Pancreas (tissue), 10 donors: ENCODE measurements at regions of chr5 and their contacts with region 1.

Region 1: GRCh38 chr5:36739751-36740221 is 133.4 kb downstream of the SLC1A3 start:
- DNase-seq: peak; percentile 66 to 90 (median 78)
- ATAC-seq: peak; percentile 49 to 82 (median 72)
- H3K4me3 ChIP-seq: no peak overlapping the region
- H3K27ac ChIP-seq: peak overlapping the region in 3 of 4 donors; percentile 3 to 78 (median 67)
- H3K4me1 ChIP-seq: peaks cover 4 to 31% (median 23%) of the 10 kb centered on the region in 3 donors
- H3K27me3 ChIP-seq: no peaks in the 10 kb centered on the region
- CTCF ChIP-seq: peak; percentile 72 to 92 (median 80)

Region 2: DNA sequence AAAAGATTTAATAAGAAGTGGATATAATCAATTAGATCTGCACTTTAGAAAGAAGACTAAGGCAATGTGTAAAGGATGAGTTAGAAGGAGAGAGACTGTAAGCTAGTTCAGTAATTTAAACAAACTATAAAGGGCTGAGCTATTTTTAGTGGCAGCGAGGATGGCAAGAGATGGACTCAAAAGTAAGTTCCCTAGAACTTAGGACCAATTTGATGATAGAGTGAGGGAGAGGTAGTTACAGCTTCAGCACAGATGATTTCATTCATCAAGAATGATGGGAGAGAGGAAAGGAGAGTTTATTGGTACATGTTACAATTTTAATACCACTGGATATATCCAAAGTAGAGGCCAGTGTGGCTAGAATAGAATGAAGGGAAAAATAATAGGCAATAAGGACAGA is 517.2 kb before region 1 on chr5:
- intact Hi-C with region 1: no loop called
- DNase-seq: no peak
- ATAC-seq: no peak
- H3K4me3 ChIP-seq: no peak overlapping the region
- H3K27ac ChIP-seq: no peak overlapping the region
- H3K4me1 ChIP-seq: no peaks in the 10 kb centered on the region
- H3K27me3 ChIP-seq: no peaks in the 10 kb centered on the region
- CTCF ChIP-seq: no peak

Region 3: GRCh38 chr5:36264202-36264760 is 475.5 kb before region 1 on chr5:
- intact Hi-C with region 1: no loop called
- DNase-seq: no peak
- ATAC-seq: peak in 2 of 4 donors; percentile 29 to 43
- H3K4me3 ChIP-seq: no peak overlapping the region
- H3K27ac ChIP-seq: no peak overlapping the region
- H3K4me1 ChIP-seq: no peaks in the 10 kb centered on the region
- H3K27me3 ChIP-seq: no peaks in the 10 kb centered on the region
- CTCF ChIP-seq: no peak

Region 4: DNA sequence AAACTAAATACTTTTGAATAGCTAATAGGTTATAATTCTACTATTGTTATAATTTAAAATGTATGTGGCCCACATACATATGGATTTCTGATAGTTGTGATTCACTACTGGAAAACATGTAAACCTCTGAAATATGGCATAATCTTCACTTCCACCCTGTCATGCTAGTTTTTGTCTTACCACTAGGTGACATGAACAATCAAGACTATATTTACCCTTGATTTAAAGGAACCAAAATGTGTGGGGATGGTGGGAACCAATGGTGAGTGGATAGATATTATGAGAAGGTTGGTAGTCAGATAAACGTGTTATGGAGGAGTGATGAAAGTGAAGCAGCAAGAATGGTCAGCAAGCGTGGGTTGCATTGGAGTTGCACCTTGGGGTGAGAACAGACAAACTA is 126.4 kb after region 1 on chr5:
- intact Hi-C with region 1: loop called in 2 of 3 experiments (anchors 5 to 10 kb)
- DNase-seq: no peak
- ATAC-seq: no peak
- H3K4me3 ChIP-seq: no peak overlapping the region
- H3K27ac ChIP-seq: no peak overlapping the region
- H3K4me1 ChIP-seq: no peaks in the 10 kb centered on the region
- H3K27me3 ChIP-seq: no peaks in the 10 kb centered on the region
- CTCF ChIP-seq: no peak

Region 5: GRCh38 chr5:37005946-37006540 is 266.3 kb after region 1 on chr5:
- intact Hi-C with region 1: loop called in 2 of 3 experiments (anchors 10 kb)
- DNase-seq: no peak
- ATAC-seq: peak in 3 of 4 donors; percentile 69 to 75 (median 69)
- H3K4me3 ChIP-seq: no peak overlapping the region
- H3K27ac ChIP-seq: no peak overlapping the region
- H3K4me1 ChIP-seq: no peaks in the 10 kb centered on the region
- H3K27me3 ChIP-seq: no peaks in the 10 kb centered on the region
- CTCF ChIP-seq: peak in 3 of 4 donors; percentile 31 to 66 (median 41)